IMR-90 (cell line): ENCODE measurements at regions of chr6 and their contacts with region 1.

Region 1: DNA sequence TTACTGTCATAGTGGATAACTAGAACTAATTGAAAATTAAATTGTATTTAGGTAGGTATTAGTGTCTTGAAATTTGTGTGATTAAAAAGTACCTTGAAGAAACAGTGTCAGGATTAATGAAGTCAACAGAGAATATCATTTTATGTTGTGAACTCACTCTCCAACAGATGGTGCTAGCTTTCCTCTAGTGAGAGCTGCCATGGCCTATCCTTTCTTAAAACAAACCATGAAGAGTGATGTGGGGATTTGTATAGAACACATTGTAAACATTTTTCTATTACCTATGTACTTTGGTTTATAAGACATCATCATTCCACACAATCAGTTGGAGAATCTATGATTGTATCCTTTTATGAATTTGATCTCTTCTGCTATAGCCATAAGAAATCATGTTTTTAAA is 4.8 kb upstream of the SRSF12 start:
- DNase-seq: peak; percentile 52
- ATAC-seq: peak; percentile 85
- H3K4me3 ChIP-seq: no peak overlapping the region
- H3K27ac ChIP-seq: no peak overlapping the region
- H3K4me1 ChIP-seq: no peaks in the 10 kb centered on the region
- H3K27me3 ChIP-seq: peaks cover 8% of the 10 kb centered on the region
- CTCF ChIP-seq: peak; percentile 67
- POLR2A ChIP-seq: no peak
- RAD21 ChIP-seq: peak; percentile 78

Region 2: GRCh38 chr6:89242574-89243330 is 120.1 kb after region 1 on chr6:
- CTCF ChIA-PET with region 1: interaction called, 3 read pairs
- POLR2A ChIA-PET with region 1: no interaction called
- dilution Hi-C with region 1: no loop called
- in situ Hi-C with region 1: loop called (anchors 10 kb)
- intact Hi-C with region 1: loop called (anchors 1 kb)
- DNase-seq: peak; percentile 61
- ATAC-seq: peak; percentile 85
- H3K4me3 ChIP-seq: no peak overlapping the region
- H3K27ac ChIP-seq: no peak overlapping the region
- H3K4me1 ChIP-seq: no peaks in the 10 kb centered on the region
- H3K27me3 ChIP-seq: peaks cover 18% of the 10 kb centered on the region
- CTCF ChIP-seq: peak; percentile 73
- POLR2A ChIP-seq: no peak
- RAD21 ChIP-seq: peak; percentile 82